ENCODE measurements at regions of chr10 and their contacts with region 1.

Region 1: GRCh38 chr10:88042160-88043100 is 179.0 kb downstream of the PTEN start:
- DNase-seq: peak in 1 of 2 donors; percentile 69
- ATAC-seq: peak; percentile 63
- H3K4me3 ChIP-seq: no peak overlapping the region
- H3K27ac ChIP-seq: peak overlapping the region; percentile 82 to 97
- H3K4me1 ChIP-seq: peaks cover 11 to 16% of the 10 kb centered on the region in 2 donors
- H3K27me3 ChIP-seq: no peaks in the 10 kb centered on the region

Region 2: DNA sequence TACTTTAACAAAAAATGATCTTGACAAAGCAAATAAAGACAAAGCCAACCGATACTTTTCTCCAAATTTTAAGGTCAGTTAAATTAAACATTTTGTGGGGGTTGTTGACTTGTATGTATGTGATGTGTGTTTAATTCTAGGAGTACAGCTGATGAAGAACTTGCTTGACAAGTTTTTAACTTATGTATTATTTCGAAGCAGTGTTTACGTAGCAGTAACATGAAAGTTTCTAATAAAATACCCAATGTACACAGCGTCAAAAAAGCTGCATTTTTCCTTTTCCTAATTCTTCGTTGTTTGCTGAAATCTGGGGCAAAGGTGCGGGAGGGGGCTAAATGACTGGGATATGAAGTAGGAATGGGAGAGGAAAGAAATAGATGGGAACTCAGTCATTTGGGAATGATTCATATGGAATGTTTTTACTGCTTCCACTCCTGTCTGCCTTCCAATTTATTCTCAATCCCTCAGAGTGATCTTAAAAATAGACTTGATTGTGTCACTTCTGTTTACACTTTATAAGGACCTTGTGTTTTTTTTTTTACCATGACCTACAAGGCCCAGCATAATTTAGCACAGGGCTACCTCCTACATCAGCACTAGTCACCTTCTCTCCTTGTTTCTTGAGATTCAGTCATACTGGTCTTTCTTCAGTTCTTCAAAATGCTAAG is 81.2 kb before region 1 on chr10:
- intact Hi-C with region 1: loop called in 1 of 2 experiments (anchors 5 kb)
- DNase-seq: no peak
- ATAC-seq: peak; percentile 82
- H3K4me3 ChIP-seq: no peak overlapping the region
- H3K27ac ChIP-seq: no peak overlapping the region
- H3K4me1 ChIP-seq: peaks cover 0 to 2% of the 10 kb centered on the region in 2 donors
- H3K27me3 ChIP-seq: no peaks in the 10 kb centered on the region

Region 3: DNA sequence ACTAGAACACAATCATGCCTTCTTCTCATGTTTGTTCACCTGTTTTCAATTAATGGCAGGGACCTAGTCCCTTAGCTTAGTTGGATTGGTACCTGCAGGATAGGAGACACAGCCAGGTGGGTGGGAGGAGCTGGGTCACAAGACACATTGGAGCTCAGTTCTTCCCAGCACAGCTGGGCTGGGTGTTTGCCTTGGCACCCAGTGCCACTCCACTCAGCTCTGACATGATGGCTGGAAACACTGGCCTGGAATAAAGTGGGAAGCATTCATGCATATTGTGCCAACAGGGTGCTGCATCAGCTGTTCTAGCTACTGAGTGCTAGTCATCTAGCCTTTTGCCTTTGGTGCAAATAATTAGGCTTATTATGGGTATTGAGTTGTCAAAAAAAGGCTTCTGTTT is 47.1 kb after region 1 on chr10:
- intact Hi-C with region 1: loop called in 1 of 2 experiments (anchors 5 kb)
- DNase-seq: peak in 1 of 2 donors; percentile 59
- ATAC-seq: no peak
- H3K4me3 ChIP-seq: no peak overlapping the region
- H3K27ac ChIP-seq: peak overlapping the region in 1 of 2 donors; percentile 37
- H3K4me1 ChIP-seq: peaks cover 4 to 12% of the 10 kb centered on the region in 2 donors
- H3K27me3 ChIP-seq: no peaks in the 10 kb centered on the region